Calu3 (cell line): ENCODE measurements at regions of chr12 and their contacts with region 1.

Region 1: GRCh38 chr12:117587631-117588287 is 226.3 kb upstream of the NOS1 start:
- DNase-seq: peak; percentile 77
- H3K4me3 Mint-ChIP-seq: no peak overlapping the region
- H3K27ac Mint-ChIP-seq: no peak overlapping the region
- H3K4me1 Mint-ChIP-seq: no peaks in the 10 kb centered on the region
- H3K27me3 Mint-ChIP-seq: peaks cover 56% of the 10 kb centered on the region
- CTCF ChIP-seq: peak; percentile 90

Region 2: GRCh38 chr12:117538032-117538690 is 49.6 kb before region 1 on chr12:
- CTCF ChIA-PET with region 1: no interaction called
- intact Hi-C with region 1: no loop called
- DNase-seq: no peak
- H3K4me3 Mint-ChIP-seq: no peak overlapping the region
- H3K27ac Mint-ChIP-seq: no peak overlapping the region
- H3K4me1 Mint-ChIP-seq: no peaks in the 10 kb centered on the region
- H3K27me3 Mint-ChIP-seq: peaks cover 52% of the 10 kb centered on the region
- CTCF ChIP-seq: no peak

Region 3: DNA sequence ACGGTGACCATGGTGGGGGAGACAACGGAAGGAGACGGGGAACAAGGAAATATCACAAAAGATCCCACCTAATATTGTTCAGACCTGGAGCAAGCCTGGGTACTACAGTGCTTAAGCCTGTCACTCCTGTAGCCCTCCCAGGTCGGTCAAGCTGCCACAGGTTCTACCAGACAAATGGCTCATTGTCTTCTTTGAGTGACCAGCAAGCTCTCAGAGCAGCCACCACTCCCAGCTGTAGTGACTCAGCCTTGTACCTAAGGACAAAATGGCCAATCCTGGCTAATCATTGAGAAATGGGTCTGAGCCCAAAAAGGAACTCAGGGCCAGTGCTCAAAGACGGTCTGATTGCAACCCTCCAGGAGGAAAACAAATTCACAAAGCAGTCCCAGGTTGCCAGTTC is 12.1 kb after region 1 on chr12:
- CTCF ChIA-PET with region 1: interaction called, 10 read pairs
- intact Hi-C with region 1: no loop called
- DNase-seq: peak; percentile 80
- H3K4me3 Mint-ChIP-seq: peak overlapping the region; percentile 10
- H3K27ac Mint-ChIP-seq: peak overlapping the region; percentile 55
- H3K4me1 Mint-ChIP-seq: peaks cover 36% of the 10 kb centered on the region
- H3K27me3 Mint-ChIP-seq: no peaks in the 10 kb centered on the region
- CTCF ChIP-seq: no peak

Region 4: GRCh38 chr12:117685110-117685926 is 97.6 kb after region 1 on chr12:
- CTCF ChIA-PET with region 1: no interaction called
- intact Hi-C with region 1: no loop called
- DNase-seq: peak; percentile 75
- H3K4me3 Mint-ChIP-seq: no peak overlapping the region
- H3K27ac Mint-ChIP-seq: no peak overlapping the region
- H3K4me1 Mint-ChIP-seq: peaks cover 8% of the 10 kb centered on the region
- H3K27me3 Mint-ChIP-seq: peaks cover 20% of the 10 kb centered on the region
- CTCF ChIP-seq: no peak

Region 5: DNA sequence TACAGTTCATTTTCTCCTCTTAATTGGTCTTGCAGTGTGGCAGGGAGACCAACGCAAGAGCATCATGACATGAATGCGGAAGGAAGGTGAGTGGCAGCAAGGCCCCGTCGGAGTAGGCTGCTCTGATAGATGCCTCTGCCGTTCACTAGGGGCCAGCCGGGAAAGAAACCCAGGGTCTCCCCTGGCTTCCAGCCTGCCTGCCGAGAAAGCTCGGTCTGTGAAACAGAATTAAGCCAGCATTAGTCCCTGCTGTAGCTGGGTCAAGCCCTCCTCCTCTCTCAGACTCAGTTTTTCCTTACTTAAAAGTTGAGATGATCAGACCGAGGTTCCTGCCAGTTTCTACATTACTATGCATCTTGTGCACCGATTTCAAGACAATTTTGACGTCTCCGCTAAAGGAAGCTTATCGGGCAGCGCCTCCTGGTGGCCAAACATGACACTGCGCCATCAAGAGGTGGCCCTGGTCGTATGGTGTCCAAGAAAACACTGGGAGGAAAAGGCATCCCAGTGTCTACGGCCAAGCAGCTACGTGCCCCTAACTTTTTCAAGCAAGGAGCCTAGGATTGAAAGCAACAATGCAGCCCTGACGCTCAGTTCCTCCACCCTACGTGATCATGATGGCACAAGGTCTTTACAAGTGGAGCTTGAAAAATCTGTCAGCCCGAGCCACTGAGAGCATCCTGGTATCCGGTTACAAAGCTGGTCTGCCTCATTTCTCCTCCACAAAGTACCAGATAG is 249.4 kb after region 1 on chr12:
- CTCF ChIA-PET with region 1: interaction called, 7 read pairs
- intact Hi-C with region 1: loop called (anchors 5 kb)
- DNase-seq: peak; percentile 84
- H3K4me3 Mint-ChIP-seq: no peak overlapping the region
- H3K27ac Mint-ChIP-seq: no peak overlapping the region
- H3K4me1 Mint-ChIP-seq: peaks cover 7% of the 10 kb centered on the region
- H3K27me3 Mint-ChIP-seq: peaks cover 42% of the 10 kb centered on the region
- CTCF ChIP-seq: peak; percentile 96